ENCODE measurements at regions of chr4 and their contacts with region 1.

Region 1: DNA sequence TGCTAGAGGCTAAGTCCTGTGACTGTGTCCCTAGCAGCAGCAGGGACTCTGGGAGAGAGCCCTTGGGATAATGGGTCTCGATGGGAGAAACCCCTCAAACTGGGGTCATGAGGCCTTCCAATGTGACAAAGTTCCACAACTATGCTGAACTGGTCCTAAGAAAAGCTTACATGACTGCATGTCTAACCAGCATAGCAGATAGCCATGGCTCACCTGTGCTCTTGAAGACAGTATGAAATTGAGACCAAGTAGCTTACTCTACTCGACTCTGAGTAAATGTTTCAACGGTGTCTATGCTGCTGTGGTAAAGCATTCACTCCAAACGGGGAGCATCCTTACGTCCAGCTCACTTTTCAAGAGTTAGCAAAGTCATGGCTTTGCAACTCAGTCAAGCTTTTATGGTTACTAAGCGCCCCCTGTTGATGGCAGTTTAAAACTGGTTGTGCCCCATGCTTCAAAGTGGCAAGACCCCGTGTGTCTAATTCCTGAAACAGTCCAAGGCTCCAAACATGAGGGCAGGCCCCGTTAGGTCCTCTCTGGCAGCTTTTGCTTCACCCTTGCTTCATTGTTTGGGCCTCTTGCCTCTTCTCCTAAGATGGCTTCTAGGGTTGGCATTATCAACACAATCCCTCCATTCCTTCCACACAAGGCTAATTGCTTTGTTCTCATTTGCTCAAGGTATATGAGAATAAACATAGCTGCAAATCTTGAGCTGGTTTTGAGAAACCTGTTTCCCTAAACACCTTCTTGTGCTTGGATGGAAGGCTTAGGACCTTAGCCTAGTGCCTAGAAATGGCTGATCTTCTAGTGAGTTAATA is 46.6 kb downstream of the CCNG2 start:
- DNase-seq: peak; percentile 85
- ATAC-seq: peak; percentile 83
- H3K4me3 ChIP-seq: no peak overlapping the region
- H3K4me3 Mint-ChIP-seq: no peak overlapping the region
- H3K27ac ChIP-seq: no peak overlapping the region
- H3K27ac Mint-ChIP-seq: no peak overlapping the region
- H3K4me1 ChIP-seq: peaks cover 7% of the 10 kb centered on the region in 2 donors
- H3K4me1 Mint-ChIP-seq: peaks cover 9% of the 10 kb centered on the region
- H3K27me3 ChIP-seq: no peaks in the 10 kb centered on the region
- H3K27me3 Mint-ChIP-seq: no peaks in the 10 kb centered on the region
- CTCF ChIP-seq: peak; percentile 93

Region 2: GRCh38 chr4:76430519-76431388 is 772.8 kb before region 1 on chr4:
- CTCF ChIA-PET with region 1: interaction called, 10 read pairs
- POLR2A ChIA-PET with region 1: no interaction called
- intact Hi-C with region 1: loop called (anchors 2 kb)
- DNase-seq: peak; percentile 65
- ATAC-seq: no peak
- H3K4me3 ChIP-seq: no peak overlapping the region
- H3K4me3 Mint-ChIP-seq: no peak overlapping the region
- H3K27ac ChIP-seq: no peak overlapping the region
- H3K27ac Mint-ChIP-seq: no peak overlapping the region
- H3K4me1 ChIP-seq: peaks cover 7 to 15% of the 10 kb centered on the region in 2 donors
- H3K4me1 Mint-ChIP-seq: peaks cover 19% of the 10 kb centered on the region
- H3K27me3 ChIP-seq: no peaks in the 10 kb centered on the region
- H3K27me3 Mint-ChIP-seq: peaks cover 16% of the 10 kb centered on the region
- CTCF ChIP-seq: peak; percentile 89

Region 3: GRCh38 chr4:77052352-77052751 is 151.2 kb before region 1 on chr4:
- CTCF ChIA-PET with region 1: interaction called, 184 read pairs
- POLR2A ChIA-PET with region 1: interaction called, 7 read pairs
- intact Hi-C with region 1: loop called (anchors 1 kb)
- DNase-seq: peak; percentile 70
- ATAC-seq: no peak
- H3K4me3 ChIP-seq: no peak overlapping the region
- H3K4me3 Mint-ChIP-seq: no peak overlapping the region
- H3K27ac ChIP-seq: no peak overlapping the region
- H3K27ac Mint-ChIP-seq: peak overlapping the region; percentile 59
- H3K4me1 ChIP-seq: no peaks in the 10 kb centered on the region
- H3K4me1 Mint-ChIP-seq: no peaks in the 10 kb centered on the region
- H3K27me3 ChIP-seq: no peaks in the 10 kb centered on the region
- H3K27me3 Mint-ChIP-seq: no peaks in the 10 kb centered on the region
- CTCF ChIP-seq: peak; percentile 61

Region 4: GRCh38 chr4:77082886-77083608 is 120.5 kb before region 1 on chr4:
- CTCF ChIA-PET with region 1: interaction called, 444 read pairs
- POLR2A ChIA-PET with region 1: no interaction called
- intact Hi-C with region 1: no loop called
- DNase-seq: no peak
- ATAC-seq: no peak
- H3K4me3 ChIP-seq: no peak overlapping the region
- H3K4me3 Mint-ChIP-seq: no peak overlapping the region
- H3K27ac ChIP-seq: no peak overlapping the region
- H3K27ac Mint-ChIP-seq: no peak overlapping the region
- H3K4me1 ChIP-seq: peaks cover 3 to 9% of the 10 kb centered on the region in 2 donors
- H3K4me1 Mint-ChIP-seq: peaks cover 17% of the 10 kb centered on the region
- H3K27me3 ChIP-seq: no peaks in the 10 kb centered on the region
- H3K27me3 Mint-ChIP-seq: no peaks in the 10 kb centered on the region
- CTCF ChIP-seq: no peak

Region 5: DNA sequence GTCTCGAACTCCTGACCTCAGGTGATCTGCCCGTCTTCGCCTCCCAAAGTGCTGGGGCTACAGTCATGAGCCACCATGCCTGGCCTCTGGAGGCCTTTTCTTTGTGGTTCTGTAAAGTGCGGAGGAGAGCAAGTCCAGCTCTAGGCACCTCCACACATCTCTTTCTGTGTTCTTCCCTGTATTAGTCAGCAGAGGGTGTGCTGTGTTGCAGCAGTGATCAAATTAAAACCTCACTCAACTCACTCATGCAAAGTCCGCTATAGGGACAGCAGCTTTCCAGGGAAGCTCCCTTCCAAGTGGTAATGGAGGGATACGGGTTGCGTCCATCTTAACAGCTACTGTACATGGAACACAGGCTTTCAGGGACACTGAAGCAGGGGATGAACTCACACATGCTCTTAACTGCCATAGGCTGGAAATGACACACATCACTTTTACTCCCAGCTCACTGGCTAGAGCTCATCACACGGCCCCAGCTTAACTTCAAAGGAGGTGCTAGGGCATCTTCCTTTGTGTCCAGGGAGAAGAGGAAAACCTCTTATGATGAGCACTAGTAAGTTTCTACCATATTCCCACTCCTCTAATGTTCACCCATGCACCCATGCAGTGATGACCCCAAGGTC is 82.6 kb before region 1 on chr4:
- CTCF ChIA-PET with region 1: interaction called, 232 read pairs
- POLR2A ChIA-PET with region 1: no interaction called
- intact Hi-C with region 1: loop called (anchors 1 kb)
- DNase-seq: peak; percentile 47
- ATAC-seq: peak; percentile 78
- H3K4me3 ChIP-seq: no peak overlapping the region
- H3K4me3 Mint-ChIP-seq: peak overlapping the region; percentile 49
- H3K27ac ChIP-seq: no peak overlapping the region
- H3K27ac Mint-ChIP-seq: peak overlapping the region; percentile 20
- H3K4me1 ChIP-seq: peaks cover 42 to 49% of the 10 kb centered on the region in 2 donors
- H3K4me1 Mint-ChIP-seq: peaks cover 53% of the 10 kb centered on the region
- H3K27me3 ChIP-seq: no peaks in the 10 kb centered on the region
- H3K27me3 Mint-ChIP-seq: no peaks in the 10 kb centered on the region
- CTCF ChIP-seq: peak; percentile 42

Region 6: DNA sequence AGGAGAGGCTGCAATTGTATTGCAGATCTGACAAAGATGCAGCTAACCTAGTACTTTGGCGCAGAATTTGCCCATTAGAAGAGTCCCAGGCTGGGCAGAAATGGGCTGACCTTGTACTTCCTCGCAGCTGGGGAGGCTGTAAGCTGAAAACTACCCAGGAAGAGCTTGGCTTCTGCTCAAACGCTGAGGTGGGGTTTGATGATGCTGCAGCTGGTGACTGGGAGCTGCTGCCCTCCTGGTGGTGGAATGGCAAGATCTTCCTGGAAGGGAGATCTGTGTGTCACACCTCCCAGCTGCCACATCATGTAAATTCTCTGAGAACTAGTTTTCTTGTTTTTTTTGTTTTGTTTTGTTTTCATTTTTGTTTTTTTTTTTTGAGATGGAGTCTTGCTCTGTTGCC is 29.2 kb before region 1 on chr4:
- CTCF ChIA-PET with region 1: interaction called, 14 read pairs
- POLR2A ChIA-PET with region 1: no interaction called
- intact Hi-C with region 1: no loop called
- DNase-seq: no peak
- ATAC-seq: no peak
- H3K4me3 ChIP-seq: no peak overlapping the region
- H3K4me3 Mint-ChIP-seq: no peak overlapping the region
- H3K27ac ChIP-seq: no peak overlapping the region
- H3K27ac Mint-ChIP-seq: no peak overlapping the region
- H3K4me1 ChIP-seq: no peaks in the 10 kb centered on the region
- H3K4me1 Mint-ChIP-seq: peaks cover 4% of the 10 kb centered on the region
- H3K27me3 ChIP-seq: no peaks in the 10 kb centered on the region
- H3K27me3 Mint-ChIP-seq: no peaks in the 10 kb centered on the region
- CTCF ChIP-seq: no peak

Region 7: DNA sequence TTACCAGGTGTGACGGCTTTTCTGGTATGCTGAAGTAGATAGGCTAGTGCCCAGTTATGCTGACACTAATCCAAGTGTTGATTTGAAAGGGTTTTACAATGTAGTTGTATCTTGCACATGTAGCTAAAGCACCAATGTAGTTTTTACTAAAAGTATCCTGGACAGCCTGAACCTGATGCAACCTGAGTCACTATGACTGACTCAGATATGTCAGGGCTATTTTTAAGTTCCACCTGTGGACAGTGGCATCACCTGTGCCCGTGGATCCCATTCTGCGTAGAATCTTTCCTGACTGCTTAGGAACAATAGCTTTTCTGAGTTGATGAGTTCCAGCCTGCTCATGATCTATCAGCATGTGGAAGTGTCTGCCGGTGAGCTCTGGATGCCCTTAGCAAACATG is 11.5 kb after region 1 on chr4:
- CTCF ChIA-PET with region 1: interaction called, 30 read pairs
- POLR2A ChIA-PET with region 1: no interaction called
- intact Hi-C with region 1: no loop called
- DNase-seq: no peak
- ATAC-seq: no peak
- H3K4me3 ChIP-seq: no peak overlapping the region
- H3K4me3 Mint-ChIP-seq: no peak overlapping the region
- H3K27ac ChIP-seq: no peak overlapping the region
- H3K27ac Mint-ChIP-seq: no peak overlapping the region
- H3K4me1 ChIP-seq: no peaks in the 10 kb centered on the region
- H3K4me1 Mint-ChIP-seq: no peaks in the 10 kb centered on the region
- H3K27me3 ChIP-seq: no peaks in the 10 kb centered on the region
- H3K27me3 Mint-ChIP-seq: no peaks in the 10 kb centered on the region
- CTCF ChIP-seq: no peak

Region 8: DNA sequence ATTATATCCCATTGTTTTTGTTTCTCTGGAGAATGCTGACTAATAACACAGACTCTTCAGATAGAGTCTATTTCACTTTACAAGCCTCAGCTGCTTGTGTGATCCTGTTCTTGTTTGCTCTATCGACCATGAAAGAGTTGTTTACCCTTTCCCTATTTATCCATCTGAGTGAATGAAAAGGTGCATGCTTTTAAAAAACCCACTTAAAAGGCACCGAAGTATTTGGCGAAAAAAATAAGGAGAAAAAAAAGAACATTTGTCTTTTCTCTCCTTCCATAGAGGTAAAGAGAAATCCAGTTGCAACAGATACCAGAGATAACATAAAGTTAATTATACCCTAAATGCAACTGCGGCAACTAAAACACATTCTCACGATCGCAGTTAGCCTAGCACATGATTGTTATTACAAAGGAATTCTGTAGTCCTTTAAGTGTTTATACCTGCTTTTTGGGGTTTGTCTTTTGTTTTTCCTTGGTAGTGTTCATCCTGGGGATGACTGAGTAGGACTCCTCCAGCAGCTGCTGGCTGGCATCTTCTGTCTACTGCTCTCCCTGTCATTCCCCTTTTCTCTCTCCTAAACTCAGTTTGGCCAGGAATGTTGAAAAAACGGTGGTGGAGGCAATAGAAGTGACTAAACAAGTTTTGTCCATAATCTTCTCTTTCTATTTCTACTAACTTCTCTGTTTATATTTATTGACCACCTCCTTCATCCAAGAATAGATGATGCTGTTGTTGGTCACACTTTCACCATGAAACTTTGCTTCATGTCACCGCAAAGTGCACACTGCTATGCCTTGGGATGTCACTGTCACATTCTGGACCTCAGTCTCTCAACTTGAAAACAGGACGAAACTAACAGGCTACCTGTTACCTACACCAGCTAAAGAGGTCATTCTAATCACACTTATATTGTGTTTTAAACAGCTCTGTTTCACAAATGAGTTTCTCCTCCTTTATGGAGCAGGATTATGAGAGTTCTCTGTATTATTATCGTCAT is 811.6 kb after region 1 on chr4:
- CTCF ChIA-PET with region 1: no interaction called
- POLR2A ChIA-PET with region 1: no interaction called
- intact Hi-C with region 1: no loop called
- DNase-seq: no peak
- ATAC-seq: no peak
- H3K4me3 ChIP-seq: no peak overlapping the region
- H3K4me3 Mint-ChIP-seq: no peak overlapping the region
- H3K27ac ChIP-seq: no peak overlapping the region
- H3K27ac Mint-ChIP-seq: no peak overlapping the region
- H3K4me1 ChIP-seq: no peaks in the 10 kb centered on the region
- H3K4me1 Mint-ChIP-seq: no peaks in the 10 kb centered on the region
- H3K27me3 ChIP-seq: peaks cover 0 to 3% (median 0%) of the 10 kb centered on the region in 4 experiments
- H3K27me3 Mint-ChIP-seq: peaks cover 18% of the 10 kb centered on the region
- CTCF ChIP-seq: no peak